ENCODE measurements at regions of chr19 and their contacts with region 1.

Region 1: GRCh38 chr19:44071824-44072542 is at the start of gene ZNF284:
- DNase-seq: peak; percentile 88
- ATAC-seq: peak; percentile 99
- H3K4me3 Mint-ChIP-seq: peak within 1 kb of the TSS; percentile 83
- H3K27ac Mint-ChIP-seq: peak within 1 kb of the TSS; percentile 78
- H3K4me1 Mint-ChIP-seq: peaks cover 23% of the 10 kb centered on the region
- H3K27me3 Mint-ChIP-seq: peaks cover 2% of the 10 kb centered on the region
- total RNA-seq, gene ZNF284: 2.1 TPM

Region 2: DNA sequence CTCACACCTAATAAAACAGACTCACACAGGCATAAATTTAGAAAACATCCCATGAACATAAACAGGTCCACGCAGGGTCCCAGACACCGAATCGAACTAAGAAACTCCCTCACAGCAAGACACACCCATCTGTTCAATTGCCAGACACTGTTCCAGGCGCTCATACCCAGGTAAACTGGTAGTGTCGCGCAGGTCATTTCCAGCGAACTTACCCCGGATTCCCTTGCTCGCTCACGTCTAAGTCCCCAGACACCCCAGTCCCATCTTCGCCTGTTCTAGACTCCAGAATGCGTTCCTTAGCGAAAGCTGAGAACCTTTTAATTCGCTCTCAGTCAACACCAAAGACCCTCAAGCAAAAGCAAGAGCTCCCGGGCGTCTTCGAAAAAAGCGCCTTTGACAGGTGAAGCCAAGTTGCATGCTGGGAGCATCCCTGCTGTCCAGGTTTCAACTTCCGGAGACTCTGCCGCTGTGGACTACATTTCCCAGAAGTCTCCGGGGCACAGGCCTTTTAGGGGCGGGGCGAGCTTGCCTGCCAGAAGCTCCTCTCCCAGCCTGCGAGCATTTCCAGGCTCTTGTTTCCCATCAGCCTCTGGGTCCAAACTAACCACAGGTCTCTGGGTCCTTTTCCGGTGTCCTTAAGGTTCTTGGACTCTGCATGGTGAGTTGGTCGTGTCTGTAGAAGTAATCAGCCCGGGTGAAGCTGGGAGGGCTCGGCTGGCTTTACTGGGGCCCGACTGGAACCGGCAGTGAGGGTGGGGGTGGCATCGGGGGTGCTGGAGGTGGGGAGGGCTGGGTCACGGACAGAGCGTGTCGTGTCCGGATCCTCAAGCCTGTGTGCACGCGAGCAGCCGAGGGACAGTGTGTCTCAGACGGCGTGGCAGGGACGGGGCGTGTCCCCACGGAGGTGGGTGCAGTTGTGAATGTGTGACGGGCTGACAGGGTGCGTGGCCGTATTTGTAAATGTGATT is 244.9 kb before region 1 on chr19 and contains the start of gene ZNF283:
- CTCF ChIA-PET with region 1: no interaction called
- POLR2A ChIA-PET with region 1: no interaction called
- intact Hi-C with region 1: loop called in 1 of 2 experiments (anchors 1 kb)
- DNase-seq: peak; percentile 92
- ATAC-seq: peak; percentile 99
- H3K4me3 Mint-ChIP-seq: peak within 1 kb of the TSS; percentile 87
- H3K27ac Mint-ChIP-seq: peak within 1 kb of the TSS; percentile 60
- H3K4me1 Mint-ChIP-seq: peaks cover 14% of the 10 kb centered on the region
- H3K27me3 Mint-ChIP-seq: peaks cover 5% of the 10 kb centered on the region
- total RNA-seq, gene ZNF283: 5.4 to 6.8 TPM

Region 3: GRCh38 chr19:43983912-43984686 is 87.9 kb before region 1 on chr19 and contains the start of gene ZNF155:
- CTCF ChIA-PET with region 1: no interaction called
- POLR2A ChIA-PET with region 1: no interaction called
- intact Hi-C with region 1: loop called in 1 of 2 experiments (anchors 1 kb)
- DNase-seq: peak; percentile 82
- ATAC-seq: peak; percentile 97
- H3K4me3 Mint-ChIP-seq: peak within 1 kb of the TSS; percentile 90
- H3K27ac Mint-ChIP-seq: peak within 1 kb of the TSS; percentile 92
- H3K4me1 Mint-ChIP-seq: peaks cover 11% of the 10 kb centered on the region
- H3K27me3 Mint-ChIP-seq: no peaks in the 10 kb centered on the region
- total RNA-seq, gene ZNF155: 4.5 to 6.0 TPM

Region 4: GRCh38 chr19:44083866-44084265 is 11.9 kb after region 1 on chr19:
- CTCF ChIA-PET with region 1: no interaction called
- POLR2A ChIA-PET with region 1: no interaction called
- intact Hi-C with region 1: no loop called
- DNase-seq: no peak
- ATAC-seq: no peak
- H3K4me3 Mint-ChIP-seq: no peak overlapping the region
- H3K27ac Mint-ChIP-seq: no peak overlapping the region
- H3K4me1 Mint-ChIP-seq: no peaks in the 10 kb centered on the region
- H3K27me3 Mint-ChIP-seq: no peaks in the 10 kb centered on the region

Region 5: GRCh38 chr19:44141191-44142058 is 69.4 kb after region 1 on chr19 and contains the start of gene ZNF234:
- CTCF ChIA-PET with region 1: no interaction called
- POLR2A ChIA-PET with region 1: no interaction called
- intact Hi-C with region 1: loop called in 1 of 2 experiments (anchors 1 kb)
- DNase-seq: peak; percentile 82
- ATAC-seq: peak; percentile 92
- H3K4me3 Mint-ChIP-seq: peak within 1 kb of the TSS; percentile 92
- H3K27ac Mint-ChIP-seq: peak within 1 kb of the TSS; percentile 94
- H3K4me1 Mint-ChIP-seq: peaks cover 12% of the 10 kb centered on the region
- H3K27me3 Mint-ChIP-seq: no peaks in the 10 kb centered on the region
- total RNA-seq, gene ZNF234: 7.9 to 10.4 TPM

Measured in activated CD4-positive, alpha-beta T cell treated with anti-CD3 and anti-CD28 coated beads for 36 hours (primary cell).